ENCODE measurements at regions of chr17 and their contacts with region 1.

Region 1: GRCh38 chr17:38428112-38428642 is at the start of gene ARHGAP23:
- DNase-seq: peak; percentile 37
- ATAC-seq: peak; percentile 59
- H3K4me3 Mint-ChIP-seq: peak within 1 kb of the TSS; percentile 75
- H3K27ac Mint-ChIP-seq: no peak within 1 kb of the TSS
- H3K4me1 Mint-ChIP-seq: peaks cover 11% of the 10 kb centered on the region
- H3K27me3 Mint-ChIP-seq: peaks cover 36% of the 10 kb centered on the region
- CTCF ChIP-seq: no peak
- total RNA-seq, gene ARHGAP23: 0.51 and 1.3 TPM in 2 replicates

Region 2: DNA sequence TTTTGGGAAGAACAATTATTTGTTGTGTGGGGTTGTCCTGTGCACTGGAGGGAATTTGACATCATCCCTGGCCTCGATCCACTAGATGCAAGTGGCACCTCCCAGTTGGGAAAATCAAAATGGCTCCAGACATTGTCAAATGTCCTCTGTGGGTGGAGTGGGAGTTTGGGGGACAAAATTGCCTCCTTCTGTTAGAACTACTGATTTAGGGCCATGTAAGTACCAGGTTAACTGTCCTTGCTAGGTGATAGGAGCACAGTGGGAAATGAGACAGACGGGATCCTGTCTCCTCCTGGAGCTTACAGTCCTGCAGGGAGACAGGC is 56.9 kb after region 1 on chr17:
- CTCF ChIA-PET with region 1: interaction called, 7 read pairs
- POLR2A ChIA-PET with region 1: interaction called, 7 read pairs
- intact Hi-C with region 1: loop called (anchors 1 kb)
- DNase-seq: no peak
- ATAC-seq: no peak
- H3K4me3 Mint-ChIP-seq: peak overlapping the region; percentile 73
- H3K27ac Mint-ChIP-seq: peak overlapping the region; percentile 74
- H3K4me1 Mint-ChIP-seq: peaks cover 15% of the 10 kb centered on the region
- H3K27me3 Mint-ChIP-seq: peaks cover 1% of the 10 kb centered on the region
- CTCF ChIP-seq: no peak

Region 3: DNA sequence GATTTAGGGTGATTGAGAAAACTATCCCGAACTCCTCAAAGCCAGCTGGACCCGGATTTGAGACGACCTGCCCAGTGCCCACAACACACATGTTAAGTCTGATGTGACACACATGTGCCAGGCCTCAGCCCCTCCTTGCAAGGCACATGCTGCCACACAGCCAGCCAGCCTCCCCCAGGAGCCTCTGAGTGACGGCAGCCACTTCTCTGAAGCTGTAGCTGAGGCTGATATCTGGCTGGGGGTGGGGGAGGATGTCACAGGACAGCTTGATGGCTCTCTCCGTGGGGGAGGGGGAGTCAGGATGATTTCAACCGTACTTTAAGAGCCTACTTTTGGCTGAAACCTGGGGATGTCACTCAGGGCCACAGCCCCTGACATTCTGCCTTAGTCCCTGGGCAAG is 136.7 kb after region 1 on chr17:
- CTCF ChIA-PET with region 1: no interaction called
- POLR2A ChIA-PET with region 1: no interaction called
- intact Hi-C with region 1: no loop called
- DNase-seq: no peak
- ATAC-seq: no peak
- H3K4me3 Mint-ChIP-seq: no peak overlapping the region
- H3K27ac Mint-ChIP-seq: no peak overlapping the region
- H3K4me1 Mint-ChIP-seq: peaks cover 17% of the 10 kb centered on the region
- H3K27me3 Mint-ChIP-seq: peaks cover 64% of the 10 kb centered on the region
- CTCF ChIP-seq: no peak

Region 4: GRCh38 chr17:38584350-38584925 is 156.3 kb after region 1 on chr17:
- CTCF ChIA-PET with region 1: interaction called, 3 read pairs
- POLR2A ChIA-PET with region 1: no interaction called
- intact Hi-C with region 1: loop called (anchors 10 kb)
- DNase-seq: peak; percentile 57
- ATAC-seq: peak; percentile 92
- H3K4me3 Mint-ChIP-seq: no peak overlapping the region
- H3K27ac Mint-ChIP-seq: no peak overlapping the region
- H3K4me1 Mint-ChIP-seq: peaks cover 7% of the 10 kb centered on the region
- H3K27me3 Mint-ChIP-seq: peaks cover 62% of the 10 kb centered on the region
- CTCF ChIP-seq: peak; percentile 94

Region 5: DNA sequence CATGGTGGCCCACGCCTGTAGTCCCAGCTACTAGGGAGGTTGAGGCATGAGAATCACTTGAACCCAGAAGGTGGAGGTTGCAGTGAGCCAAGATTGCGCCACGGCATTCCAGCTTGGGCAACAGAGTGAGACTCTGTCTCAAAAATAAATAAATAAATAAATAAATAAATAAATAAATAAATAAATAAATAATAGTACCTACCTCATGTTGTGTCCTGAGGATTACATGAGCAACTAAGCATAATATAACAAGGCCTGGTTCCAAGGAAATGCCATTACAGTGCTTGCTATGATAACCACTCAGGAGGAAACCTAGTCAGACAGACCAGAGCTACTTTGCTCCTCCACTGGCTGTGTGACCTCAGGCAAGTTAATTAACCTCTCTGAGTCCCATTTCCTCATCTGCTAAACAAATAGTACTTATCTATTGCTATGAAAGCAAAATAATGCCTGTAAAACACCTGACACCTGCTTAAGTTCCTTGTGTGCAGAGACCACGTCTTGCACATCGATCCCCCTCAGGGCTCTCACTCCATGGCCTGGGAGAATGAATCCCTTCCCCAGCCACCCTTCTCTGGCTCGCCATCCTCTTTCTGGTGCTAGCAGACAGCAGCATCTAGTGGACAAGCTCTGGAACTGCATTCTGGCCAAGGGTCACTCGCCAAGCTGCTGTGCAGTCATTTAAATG is 239.1 kb after region 1 on chr17:
- CTCF ChIA-PET with region 1: no interaction called
- POLR2A ChIA-PET with region 1: no interaction called
- intact Hi-C with region 1: loop called (anchors 1 kb)
- DNase-seq: peak; percentile 39
- ATAC-seq: peak; percentile 87
- H3K4me3 Mint-ChIP-seq: no peak overlapping the region
- H3K27ac Mint-ChIP-seq: no peak overlapping the region
- H3K4me1 Mint-ChIP-seq: peaks cover 8% of the 10 kb centered on the region
- H3K27me3 Mint-ChIP-seq: peaks cover 57% of the 10 kb centered on the region
- CTCF ChIP-seq: peak; percentile 92

Measured in activated B cell treated with CpG ODN at 0.5 μM for 24 hours (primary cell).